ENCODE measurements at regions of chr11 and their contacts with region 1.

Region 1: GRCh38 chr11:842370-843002 is at the starts of genes POLR2L and TSPAN4:
- DNase-seq: peak; percentile 84 to 93 (median 92)
- H3K4me3 ChIP-seq: peak within 1 kb of the TSS; percentile 81 to 99 (median 88)
- H3K27ac ChIP-seq: peak within 1 kb of the TSS; percentile 84 to 95
- H3K4me1 ChIP-seq: peaks cover 0 to 52% (median 51%) of the 10 kb centered on the region in 4 experiments
- H3K27me3 ChIP-seq: no peaks in the 10 kb centered on the region

Region 2: DNA sequence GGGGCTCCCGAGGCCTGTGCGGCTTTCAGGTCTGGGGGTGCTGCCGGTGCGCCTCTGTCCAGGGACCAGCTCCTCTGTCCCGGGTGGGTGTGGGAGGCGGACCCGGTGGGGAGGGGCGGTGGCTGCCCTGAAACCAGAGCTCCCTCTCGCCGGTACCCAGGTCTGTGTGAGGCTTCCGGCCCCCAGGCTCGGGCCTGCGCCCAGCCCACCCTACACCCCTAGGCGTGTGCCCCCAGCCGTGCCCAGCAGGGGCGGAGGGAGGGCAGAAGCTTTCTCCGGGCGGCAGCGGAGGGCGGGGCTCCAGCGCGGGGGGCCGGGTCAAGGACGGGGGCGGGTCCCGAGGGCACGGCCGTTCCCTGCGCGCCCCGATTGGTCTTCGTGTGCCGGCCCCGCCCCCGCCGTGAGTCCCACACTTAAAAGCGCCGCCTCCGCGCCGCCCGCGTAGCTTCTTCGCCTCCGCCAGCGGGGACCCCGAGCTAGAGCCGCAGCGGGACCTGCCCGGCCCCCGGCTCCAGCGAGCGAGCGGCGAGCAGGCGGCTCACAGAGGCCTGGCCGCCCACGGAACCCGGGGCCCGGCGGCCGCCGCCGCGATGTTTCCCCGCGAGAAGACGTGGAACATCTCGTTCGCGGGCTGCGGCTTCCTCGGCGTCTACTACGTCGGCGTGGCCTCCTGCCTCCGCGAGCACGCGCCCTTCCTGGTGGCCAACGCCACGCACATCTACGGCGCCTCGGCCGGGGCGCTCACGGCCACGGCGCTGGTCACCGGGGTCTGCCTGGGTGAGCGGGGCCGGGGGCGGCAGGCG is 23.2 kb before region 1 on chr11:
- CTCF ChIA-PET with region 1: interaction called, 14 read pairs
- POLR2A ChIA-PET with region 1: interaction called, 15 read pairs
- DNase-seq: peak; percentile 86 to 94 (median 92)
- H3K4me3 ChIP-seq: peak overlapping the region; percentile 65 to 87 (median 81)
- H3K27ac ChIP-seq: peak overlapping the region; percentile 70 to 85
- H3K4me1 ChIP-seq: peaks cover 0 to 34% (median 33%) of the 10 kb centered on the region in 4 experiments
- H3K27me3 ChIP-seq: no peaks in the 10 kb centered on the region

Region 3: DNA sequence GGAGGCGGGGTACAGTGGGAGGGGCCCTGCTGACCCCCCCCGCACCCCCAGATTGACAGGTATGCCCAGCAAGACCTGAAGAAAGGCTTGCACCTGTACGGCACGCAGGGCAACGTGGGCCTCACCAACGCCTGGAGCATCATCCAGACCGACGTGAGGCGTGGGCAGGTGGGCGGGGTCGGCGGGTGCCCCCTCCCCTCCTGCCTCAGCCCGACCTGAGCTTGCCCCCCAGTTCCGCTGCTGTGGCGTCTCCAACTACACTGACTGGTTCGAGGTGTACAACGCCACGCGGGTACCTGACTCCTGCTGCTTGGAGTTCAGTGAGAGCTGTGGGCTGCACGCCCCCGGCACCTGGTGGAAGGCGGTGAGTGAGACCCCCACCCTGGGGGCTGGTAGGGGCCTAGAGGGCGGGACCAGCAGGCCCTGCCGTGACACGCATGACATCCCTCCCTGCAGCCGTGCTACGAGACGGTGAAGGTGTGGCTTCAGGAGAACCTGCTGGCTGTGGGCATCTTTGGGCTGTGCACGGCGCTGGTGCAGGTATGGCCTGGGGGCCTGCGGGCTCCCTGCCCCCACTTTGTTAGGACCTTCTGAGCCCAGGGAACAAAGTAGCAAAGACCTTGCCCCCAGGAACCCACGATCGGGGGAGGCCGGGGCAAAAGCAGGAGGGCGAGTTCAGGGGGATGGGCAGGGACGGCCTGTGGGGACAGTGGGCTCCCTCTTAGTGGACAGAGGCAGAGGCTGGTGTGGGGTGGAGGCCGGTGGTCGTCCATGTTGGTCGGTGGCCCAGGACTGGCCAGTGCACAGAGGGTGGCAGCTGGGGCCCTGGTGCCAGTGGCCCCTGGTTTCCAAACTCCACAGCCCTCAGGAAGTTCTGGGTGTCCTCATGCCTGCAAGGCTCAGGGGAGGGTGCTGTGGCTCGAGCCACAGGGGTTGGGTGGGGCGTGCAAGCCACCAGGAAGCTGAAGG is 23.3 kb after region 1 on chr11:
- CTCF ChIA-PET with region 1: no interaction called
- POLR2A ChIA-PET with region 1: no interaction called
- DNase-seq: no peak
- H3K4me3 ChIP-seq: no peak overlapping the region
- H3K27ac ChIP-seq: no peak overlapping the region
- H3K4me1 ChIP-seq: no peaks in the 10 kb centered on the region
- H3K27me3 ChIP-seq: no peaks in the 10 kb centered on the region

Region 4: DNA sequence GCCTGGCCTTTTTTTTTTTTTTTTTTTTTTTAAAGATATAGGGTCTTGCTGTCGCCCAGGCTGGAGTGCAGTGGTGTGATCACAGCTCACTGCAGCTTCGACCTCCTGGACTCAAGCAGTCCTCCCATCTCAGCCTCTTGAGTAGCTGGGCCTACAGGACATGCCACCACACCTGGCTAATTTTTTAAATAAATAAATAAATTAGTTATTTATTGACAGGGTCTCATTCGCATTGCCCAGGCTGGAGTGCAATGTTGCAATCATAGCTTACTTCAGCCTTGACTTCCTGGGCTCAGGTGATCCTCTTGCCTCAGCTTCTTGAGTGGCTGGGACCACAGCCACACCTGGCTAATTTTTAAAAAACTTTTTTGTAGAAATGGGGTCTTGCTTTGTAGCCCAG is 93.7 kb after region 1 on chr11:
- CTCF ChIA-PET with region 1: no interaction called
- POLR2A ChIA-PET with region 1: no interaction called
- DNase-seq: no peak
- H3K4me3 ChIP-seq: no peak overlapping the region
- H3K27ac ChIP-seq: no peak overlapping the region
- H3K4me1 ChIP-seq: peaks cover 22 to 59% (median 55%) of the 10 kb centered on the region in 4 experiments
- H3K27me3 ChIP-seq: no peaks in the 10 kb centered on the region

Region 5: DNA sequence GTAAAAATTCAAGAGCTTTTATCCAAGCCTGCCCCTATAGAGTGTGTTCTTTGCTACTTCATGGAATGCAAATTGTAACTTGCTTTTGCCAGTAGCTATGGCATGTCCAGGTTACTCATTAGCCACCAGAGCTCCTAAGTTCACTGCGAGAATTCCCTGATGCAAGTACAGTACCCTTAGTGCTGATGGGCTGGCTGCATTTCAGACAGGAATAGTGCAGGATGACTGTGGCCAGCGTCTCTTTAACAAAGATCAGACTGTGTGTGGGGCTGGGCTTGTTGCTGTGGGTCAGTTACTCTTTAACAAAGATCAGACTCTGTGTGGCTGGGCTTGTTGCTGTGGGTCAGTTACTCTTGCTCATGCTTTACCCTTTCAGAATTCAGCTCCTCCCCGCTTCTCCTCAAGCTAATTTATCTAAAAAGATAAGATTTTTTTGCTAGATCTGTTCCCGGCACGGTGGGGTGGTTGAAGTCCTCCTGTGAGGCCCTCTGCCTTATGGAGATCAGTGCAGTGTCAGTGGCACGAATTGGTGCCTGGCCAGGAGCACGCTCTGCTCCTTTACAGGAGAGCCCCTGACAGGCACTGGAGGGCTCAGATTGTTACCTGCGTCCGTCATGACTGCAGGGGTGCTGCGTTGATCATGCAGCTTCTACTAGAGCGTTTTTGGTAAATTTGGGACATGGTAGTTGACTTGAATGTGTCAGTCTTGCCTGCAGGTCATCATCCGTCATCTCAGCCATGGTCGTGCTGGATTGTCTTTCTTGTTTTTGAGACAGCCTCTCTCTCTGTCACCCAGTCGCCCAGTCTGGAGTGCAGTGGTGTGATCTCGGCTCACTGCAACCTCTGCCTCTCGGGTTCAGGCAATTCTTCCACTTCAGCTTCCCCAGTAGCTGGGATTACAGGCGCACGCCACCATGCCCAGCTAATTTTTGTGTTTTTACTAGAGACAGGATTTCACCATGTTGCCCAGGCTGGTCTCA is 110.2 kb after region 1 on chr11:
- CTCF ChIA-PET with region 1: no interaction called
- POLR2A ChIA-PET with region 1: no interaction called
- DNase-seq: no peak
- H3K4me3 ChIP-seq: no peak overlapping the region
- H3K27ac ChIP-seq: no peak overlapping the region
- H3K4me1 ChIP-seq: peaks cover 0 to 18% (median 16%) of the 10 kb centered on the region in 4 experiments
- H3K27me3 ChIP-seq: no peaks in the 10 kb centered on the region

Measured in common myeloid progenitor, CD34-positive (primary cell).